BJ (cell line): ENCODE measurements at regions of chr10 and their contacts with region 1.

Region 1: GRCh38 chr10:21495752-21496342 is 29.6 kb downstream of the SKIDA1 start:
- DNase-seq: no peak
- H3K4me3 ChIP-seq: peak overlapping the region; percentile 90
- H3K27me3 ChIP-seq: no peaks in the 10 kb centered on the region; the same call in 1 of the 2 replicates
- CTCF ChIP-seq: peak; percentile 65

Region 2: DNA sequence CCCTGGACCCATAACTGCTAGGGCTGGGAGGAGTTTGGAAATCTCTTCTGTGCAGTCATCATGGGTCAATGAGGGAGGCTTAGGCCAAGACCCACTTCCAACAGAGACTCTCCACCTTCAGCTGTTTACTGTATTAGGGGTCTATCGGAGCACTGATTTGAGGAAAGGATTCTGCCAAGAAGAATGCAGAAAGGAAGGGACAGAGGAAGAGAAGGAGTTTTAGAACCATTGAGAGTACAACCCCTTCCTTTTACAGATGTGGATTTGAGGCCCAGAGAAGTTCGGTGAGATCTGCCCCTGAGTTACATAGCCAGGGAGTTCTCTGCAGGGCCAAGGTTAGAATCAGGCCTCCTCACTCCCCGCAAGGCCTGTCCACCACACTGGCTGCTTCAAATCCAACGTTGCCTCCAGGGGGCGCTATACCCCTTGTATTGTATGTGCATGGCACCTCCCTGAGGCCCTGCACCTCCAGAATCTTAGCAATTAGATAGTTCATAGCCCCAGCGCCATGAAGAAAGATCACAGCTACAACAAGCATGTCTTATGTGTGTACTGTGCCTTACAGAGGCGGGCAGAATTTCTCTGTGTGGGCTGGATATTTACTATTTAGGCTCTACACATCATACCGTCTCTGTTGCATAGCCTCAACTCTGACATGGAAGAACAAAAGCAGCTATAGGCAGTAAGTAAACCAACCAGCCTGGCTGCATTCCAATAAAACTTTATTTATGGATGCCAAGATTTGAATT is 217.2 kb before region 1 on chr10:
- CTCF ChIA-PET with region 1: interaction called, 35 read pairs
- POLR2A ChIA-PET with region 1: no interaction called
- DNase-seq: no peak
- H3K4me3 ChIP-seq: no peak overlapping the region
- H3K27me3 ChIP-seq: no peaks in the 10 kb centered on the region
- CTCF ChIP-seq: peak; percentile 82

Region 3: GRCh38 chr10:21510241-21511074 is 14.6 kb after region 1 on chr10:
- CTCF ChIA-PET with region 1: interaction called, 34 read pairs
- POLR2A ChIA-PET with region 1: interaction called, 3 read pairs
- DNase-seq: no peak
- H3K4me3 ChIP-seq: peak overlapping the region; percentile 30
- H3K27me3 ChIP-seq: no peaks in the 10 kb centered on the region
- CTCF ChIP-seq: no peak

Region 4: DNA sequence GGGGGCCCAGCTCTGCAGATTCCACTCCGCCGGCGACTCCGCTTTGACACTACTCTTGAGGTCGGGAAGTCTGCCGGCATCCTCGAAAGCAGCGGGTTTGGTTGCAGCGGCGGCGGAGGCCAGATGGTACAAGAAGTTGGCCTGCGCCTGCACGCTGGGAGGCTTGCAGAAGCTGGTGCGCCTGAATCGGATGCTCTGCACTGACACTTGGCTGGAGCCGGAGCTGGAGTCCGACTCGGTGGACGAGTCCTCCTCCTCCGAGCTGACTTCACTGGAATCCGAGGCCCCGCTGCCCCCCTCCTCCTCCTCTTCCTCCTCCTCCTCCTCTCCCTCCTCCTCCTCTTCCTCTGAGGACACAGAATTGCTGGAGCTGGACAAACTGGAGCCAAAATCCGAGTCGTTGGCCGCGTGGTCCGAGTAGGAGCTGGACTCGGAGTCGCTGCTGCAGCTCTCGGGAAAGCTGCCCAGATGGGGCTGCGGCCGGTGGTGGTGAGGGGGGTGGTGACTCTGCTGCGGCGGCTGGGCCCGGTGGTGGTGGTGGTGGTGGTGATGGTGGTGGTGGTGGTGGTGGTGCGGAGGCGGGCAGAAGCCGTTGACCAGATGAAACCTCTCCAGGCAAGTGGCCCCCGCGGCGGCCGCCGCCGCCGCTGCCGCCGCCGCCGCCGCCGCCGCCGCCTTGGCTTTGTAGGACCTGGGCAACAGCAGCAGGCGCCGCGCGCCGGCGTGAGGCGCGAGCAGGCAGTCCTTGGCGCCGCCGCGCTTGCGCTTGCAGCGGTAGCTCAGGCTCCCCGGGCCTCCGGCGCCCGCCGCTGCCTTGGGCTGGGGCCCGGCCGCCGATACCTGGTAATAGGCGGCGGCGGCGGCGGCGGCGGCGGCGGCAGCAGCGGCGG is 20.6 kb after region 1 on chr10:
- CTCF ChIA-PET with region 1: interaction called, 34 read pairs
- POLR2A ChIA-PET with region 1: interaction called, 13 read pairs
- DNase-seq: no peak
- H3K4me3 ChIP-seq: peak overlapping the region; percentile 59
- H3K27me3 ChIP-seq: no peaks in the 10 kb centered on the region
- CTCF ChIP-seq: no peak

Region 5: GRCh38 chr10:21524526-21525366 is 28.9 kb after region 1 on chr10:
- CTCF ChIA-PET with region 1: interaction called, 12 read pairs
- POLR2A ChIA-PET with region 1: no interaction called
- DNase-seq: no peak
- H3K4me3 ChIP-seq: peak overlapping the region; percentile 59
- H3K27me3 ChIP-seq: no peaks in the 10 kb centered on the region
- CTCF ChIP-seq: no peak

Region 6: GRCh38 chr10:21732067-21732772 is 236.4 kb after region 1 on chr10:
- CTCF ChIA-PET with region 1: interaction called, 53 read pairs
- POLR2A ChIA-PET with region 1: no interaction called
- DNase-seq: peak; percentile 25
- H3K4me3 ChIP-seq: no peak overlapping the region
- H3K27me3 ChIP-seq: no peaks in the 10 kb centered on the region
- CTCF ChIP-seq: peak; percentile 97

Region 7: GRCh38 chr10:21993360-21994001 is 497.6 kb after region 1 on chr10:
- CTCF ChIA-PET with region 1: interaction called, 12 read pairs
- POLR2A ChIA-PET with region 1: no interaction called
- DNase-seq: no peak
- H3K4me3 ChIP-seq: no peak overlapping the region
- H3K27me3 ChIP-seq: no peaks in the 10 kb centered on the region
- CTCF ChIP-seq: peak; percentile 36